ENCODE measurements at regions of chr5 and their contacts with region 1.

Region 1: GRCh38 chr5:59673438-59674058 is 220.0 kb downstream of the PDE4D start:
- DNase-seq: no peak

Region 2: DNA sequence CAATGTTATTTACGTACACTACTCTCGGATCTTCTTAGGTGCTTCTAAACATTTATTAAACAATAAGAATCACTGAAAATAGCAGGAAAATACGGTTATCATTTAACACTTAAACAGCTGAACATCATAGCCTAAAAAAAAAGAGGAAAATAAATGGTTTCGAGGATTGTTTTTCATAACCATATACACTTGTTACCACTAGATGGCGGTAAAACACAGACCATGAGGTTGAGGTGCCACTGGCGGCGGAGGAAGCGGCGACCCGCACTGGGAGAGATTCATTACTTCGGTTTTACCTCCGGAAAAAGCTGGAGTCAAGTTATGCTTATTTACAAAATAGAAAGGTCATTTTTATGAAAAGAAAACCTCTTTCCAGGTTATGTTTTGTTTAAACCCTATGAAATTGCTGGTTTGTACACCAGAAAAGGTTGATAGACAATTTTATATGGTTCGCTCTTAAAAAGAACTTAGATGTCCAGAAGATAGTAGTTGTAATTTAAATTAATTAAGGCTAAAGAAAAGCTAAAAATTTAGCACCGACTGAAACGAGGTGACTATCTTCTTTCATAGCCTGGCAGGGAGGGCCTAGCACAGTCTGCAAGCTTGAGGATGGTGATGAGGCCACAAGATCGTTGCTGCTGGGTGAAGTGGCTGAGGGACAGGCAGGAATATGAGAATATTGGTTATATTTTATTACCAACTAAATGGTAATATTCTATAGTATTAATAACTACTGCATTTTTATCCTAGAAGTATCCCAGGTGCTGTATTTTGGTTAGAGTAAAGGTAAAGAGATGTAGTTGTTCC is 484.9 kb before region 1 on chr5:
- intact Hi-C with region 1: loop called (anchors 10 kb)
- DNase-seq: peak; percentile 47 to 96 (median 68)

Region 3: GRCh38 chr5:59390074-59390659 is 283.4 kb before region 1 on chr5:
- intact Hi-C with region 1: loop called (anchors 5 kb)
- DNase-seq: no peak

Region 4: GRCh38 chr5:59506285-59506877 is 167.2 kb before region 1 on chr5:
- intact Hi-C with region 1: loop called (anchors 1 kb)
- DNase-seq: no peak

Region 5: DNA sequence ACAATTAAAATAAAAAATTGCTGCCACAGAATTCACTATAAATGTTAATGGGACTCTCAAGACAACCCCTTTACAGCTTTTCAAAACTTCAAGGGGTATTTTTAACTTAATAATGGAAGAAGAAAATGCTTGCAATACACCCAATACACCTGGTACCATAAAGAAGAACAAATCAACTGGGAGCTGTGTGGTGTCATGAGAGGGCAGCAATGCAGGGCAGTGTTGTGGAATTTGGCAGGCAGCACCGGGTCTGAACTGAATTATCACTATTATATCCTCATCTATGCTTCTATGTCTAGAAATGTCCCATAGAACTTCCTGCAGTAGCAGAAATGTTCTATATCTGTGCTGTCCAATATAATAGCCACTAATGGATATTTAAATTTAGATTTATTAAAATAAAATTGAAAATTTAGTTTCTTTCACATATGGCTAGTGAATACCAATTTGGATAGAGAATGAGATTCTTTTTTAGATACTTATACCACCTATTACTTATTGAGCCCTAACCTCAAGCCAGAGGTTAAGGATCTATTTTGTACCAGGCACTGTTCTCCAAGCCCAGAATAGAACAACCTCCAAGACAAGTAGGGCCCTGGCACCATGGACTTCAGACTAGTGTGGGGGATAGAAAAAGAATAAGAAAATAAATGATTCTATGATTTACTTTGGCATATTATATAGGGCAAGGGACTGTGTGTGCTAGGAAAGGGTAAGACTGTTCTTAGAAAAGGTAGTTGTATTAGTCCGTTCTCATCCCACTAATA is 45.3 kb before region 1 on chr5:
- intact Hi-C with region 1: no loop called
- DNase-seq: no peak

Region 6: GRCh38 chr5:59799668-59800346 is 126.3 kb after region 1 on chr5:
- intact Hi-C with region 1: loop called (anchors 10 kb)
- DNase-seq: no peak

Measured in posterior cingulate gyrus (tissue), 11 donors.